Ascending aorta (tissue), 2 donors: ENCODE measurements at regions of chr16 and their contacts with region 1.

Region 1: GRCh38 chr16:82263521-82264143 is 93.6 kb upstream of the MPHOSPH6 start:
- DNase-seq: peak in 1 of 2 donors; percentile 70
- H3K4me3 ChIP-seq: peak overlapping the region in 1 of 2 donors; percentile 17
- H3K27ac ChIP-seq: peak overlapping the region in 1 of 2 donors; percentile 54
- H3K4me1 ChIP-seq: peaks cover 0 to 15% of the 10 kb centered on the region in 2 donors
- H3K27me3 ChIP-seq: no peaks in the 10 kb centered on the region
- CTCF ChIP-seq: peak; percentile 73 to 91 (median 89)

Region 2: GRCh38 chr16:82280867-82281266 is 17.2 kb after region 1 on chr16:
- intact Hi-C with region 1: no loop called
- DNase-seq: no peak
- H3K4me3 ChIP-seq: no peak overlapping the region
- H3K27ac ChIP-seq: peak overlapping the region; percentile 46 to 73
- H3K4me1 ChIP-seq: peaks cover 0 to 22% of the 10 kb centered on the region in 2 donors
- H3K27me3 ChIP-seq: no peaks in the 10 kb centered on the region
- CTCF ChIP-seq: no peak

Region 3: GRCh38 chr16:82311528-82311927 is 47.9 kb after region 1 on chr16:
- intact Hi-C with region 1: no loop called
- DNase-seq: no peak
- H3K4me3 ChIP-seq: no peak overlapping the region
- H3K27ac ChIP-seq: no peak overlapping the region
- H3K4me1 ChIP-seq: peaks cover 0 to 8% of the 10 kb centered on the region in 2 donors
- H3K27me3 ChIP-seq: no peaks in the 10 kb centered on the region
- CTCF ChIP-seq: no peak

Region 4: GRCh38 chr16:82344157-82344556 is 80.5 kb after region 1 on chr16:
- intact Hi-C with region 1: loop called (anchors 1 kb)
- DNase-seq: no peak
- H3K4me3 ChIP-seq: no peak overlapping the region
- H3K27ac ChIP-seq: no peak overlapping the region
- H3K4me1 ChIP-seq: no peaks in the 10 kb centered on the region
- H3K27me3 ChIP-seq: no peaks in the 10 kb centered on the region
- CTCF ChIP-seq: peak; percentile 41 to 66 (median 51)

Region 5: DNA sequence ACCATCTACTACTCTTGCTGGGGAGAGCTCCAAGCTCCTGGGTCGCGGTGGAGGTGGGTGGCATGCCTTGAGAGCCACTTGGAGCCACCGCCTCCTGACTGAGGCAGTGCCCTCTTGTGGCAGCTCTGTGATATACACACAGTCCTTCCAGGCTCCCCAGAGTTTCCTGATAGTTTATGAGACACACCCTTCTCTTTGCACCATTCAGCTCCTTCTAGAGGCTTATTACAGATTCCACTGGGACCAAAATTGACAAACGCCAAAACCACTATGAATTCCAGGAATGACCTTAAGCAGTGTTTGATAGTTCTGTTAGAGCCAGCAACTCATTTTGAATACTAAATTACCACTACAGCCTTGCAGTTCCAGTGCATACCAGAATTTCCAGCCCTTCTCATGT is 193.1 kb after region 1 on chr16:
- intact Hi-C with region 1: loop called (anchors 1 kb)
- DNase-seq: peak in 1 of 2 donors; percentile 65
- H3K4me3 ChIP-seq: no peak overlapping the region
- H3K27ac ChIP-seq: no peak overlapping the region
- H3K4me1 ChIP-seq: no peaks in the 10 kb centered on the region
- H3K27me3 ChIP-seq: no peaks in the 10 kb centered on the region
- CTCF ChIP-seq: peak; percentile 15 to 70 (median 66)

Region 6: GRCh38 chr16:82567175-82567574 is 303.5 kb after region 1 on chr16:
- intact Hi-C with region 1: loop called (anchors 5 kb)
- DNase-seq: no peak
- H3K4me3 ChIP-seq: no peak overlapping the region
- H3K27ac ChIP-seq: peak overlapping the region; percentile 41
- H3K4me1 ChIP-seq: no peaks in the 10 kb centered on the region
- H3K27me3 ChIP-seq: no peaks in the 10 kb centered on the region
- CTCF ChIP-seq: no peak

Region 7: DNA sequence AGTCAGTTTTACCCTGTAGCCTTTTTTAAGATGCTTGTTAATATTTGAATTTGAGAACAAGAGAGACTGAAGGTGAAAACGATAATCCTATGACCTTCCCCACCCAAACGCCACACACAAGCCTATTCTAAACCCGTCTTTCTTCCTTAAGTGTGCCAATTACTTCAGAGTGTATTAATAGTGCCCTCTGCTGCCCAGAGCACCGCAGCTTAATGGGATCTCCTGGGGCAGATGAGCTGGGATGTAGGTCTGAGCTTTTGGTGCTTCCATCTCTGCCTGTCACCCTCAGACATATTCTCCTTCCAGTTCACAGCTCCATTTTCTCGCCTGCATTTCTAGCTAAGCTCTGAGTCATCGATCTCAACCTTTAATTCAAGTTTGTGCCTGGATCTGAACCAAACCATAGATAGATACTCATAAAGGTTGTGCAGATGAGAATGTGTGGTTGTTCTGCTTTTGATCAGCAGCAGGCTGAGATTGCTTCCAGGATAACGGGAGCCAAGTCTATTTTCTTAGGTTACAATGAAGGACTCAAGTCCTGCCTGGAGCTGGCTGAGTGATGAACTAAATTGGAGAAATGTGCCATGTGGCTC is 316.8 kb after region 1 on chr16:
- intact Hi-C with region 1: loop called (anchors 2 kb)
- DNase-seq: no peak
- H3K4me3 ChIP-seq: no peak overlapping the region
- H3K27ac ChIP-seq: no peak overlapping the region
- H3K4me1 ChIP-seq: no peaks in the 10 kb centered on the region
- H3K27me3 ChIP-seq: no peaks in the 10 kb centered on the region
- CTCF ChIP-seq: peak in 1 of 3 experiments; percentile 57

Region 8: DNA sequence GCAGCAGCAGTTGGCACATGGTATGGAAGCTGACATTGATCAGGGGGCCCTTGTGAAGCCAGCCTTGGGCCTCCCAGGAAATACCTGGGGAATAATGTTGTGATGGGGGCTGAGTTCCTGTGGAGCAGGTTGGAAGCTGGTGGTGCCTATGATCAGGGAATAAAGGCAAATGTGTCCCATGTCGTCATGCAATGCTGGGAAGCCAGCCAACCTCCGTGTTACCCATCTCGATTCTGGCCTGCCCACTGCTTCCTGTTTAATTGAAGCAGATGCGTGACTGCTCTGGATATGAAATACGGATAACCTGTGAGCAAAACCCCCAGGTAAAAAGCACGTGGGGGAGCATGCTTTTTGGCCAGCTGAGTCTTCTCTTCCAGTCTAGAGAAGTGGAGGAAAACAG is 963.7 kb after region 1 on chr16:
- intact Hi-C with region 1: loop called (anchors 10 kb)
- DNase-seq: no peak
- H3K4me3 ChIP-seq: no peak overlapping the region
- H3K27ac ChIP-seq: no peak overlapping the region
- H3K4me1 ChIP-seq: no peaks in the 10 kb centered on the region
- H3K27me3 ChIP-seq: no peaks in the 10 kb centered on the region
- CTCF ChIP-seq: no peak